B cell (primary cell): ENCODE measurements at regions of chr19 and their contacts with region 1.

Region 1: GRCh38 chr19:49427855-49428546 is 2.8 kb downstream of the GFY start:
- DNase-seq: peak; percentile 57
- ATAC-seq: peak; percentile 47
- H3K4me3 ChIP-seq: peak overlapping the region in 4 of 5 experiments; percentile 11 to 63 (median 34)
- H3K4me3 Mint-ChIP-seq: peak overlapping the region; percentile 82
- H3K27ac ChIP-seq: no peak overlapping the region
- H3K27ac Mint-ChIP-seq: peak overlapping the region; percentile 32
- H3K4me1 ChIP-seq: peaks cover 54 to 63% of the 10 kb centered on the region in 2 donors
- H3K4me1 Mint-ChIP-seq: peaks cover 59% of the 10 kb centered on the region
- H3K27me3 ChIP-seq: peaks cover 0 to 99% (median 71%) of the 10 kb centered on the region in 4 experiments
- H3K27me3 Mint-ChIP-seq: peaks cover 77% of the 10 kb centered on the region
- CTCF ChIP-seq: no peak

Region 2: DNA sequence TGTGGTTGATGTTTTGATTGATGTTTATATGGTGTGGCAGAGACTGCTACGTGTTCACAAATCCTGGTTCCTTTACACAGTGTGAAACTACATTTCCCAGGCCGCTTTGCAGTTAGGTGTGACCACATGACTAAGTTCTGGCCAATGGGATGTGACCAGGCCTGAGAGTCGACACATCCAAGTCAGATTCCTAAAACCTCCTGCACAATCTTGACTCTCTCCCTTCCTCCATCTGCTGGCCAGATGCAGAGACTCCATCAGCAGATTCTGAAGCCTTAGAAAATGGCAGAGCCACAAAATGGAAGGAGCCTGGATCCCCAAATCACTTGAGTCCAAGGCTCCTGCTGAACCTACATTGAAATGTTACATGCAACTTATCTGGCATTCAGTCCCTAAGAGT is 80.2 kb before region 1 on chr19:
- CTCF ChIA-PET with region 1: no interaction called
- POLR2A ChIA-PET with region 1: no interaction called
- intact Hi-C with region 1: no loop called
- DNase-seq: peak; percentile 51
- ATAC-seq: peak; percentile 50
- H3K4me3 ChIP-seq: no peak overlapping the region
- H3K4me3 Mint-ChIP-seq: peak overlapping the region; percentile 18
- H3K27ac ChIP-seq: no peak overlapping the region
- H3K27ac Mint-ChIP-seq: peak overlapping the region; percentile 57
- H3K4me1 ChIP-seq: peaks cover 6 to 38% of the 10 kb centered on the region in 2 donors
- H3K4me1 Mint-ChIP-seq: peaks cover 39% of the 10 kb centered on the region
- H3K27me3 ChIP-seq: no peaks in the 10 kb centered on the region
- H3K27me3 Mint-ChIP-seq: no peaks in the 10 kb centered on the region
- CTCF ChIP-seq: no peak

Region 3: GRCh38 chr19:49409441-49410029 is 18.5 kb before region 1 on chr19:
- CTCF ChIA-PET with region 1: interaction called, 4 read pairs
- POLR2A ChIA-PET with region 1: interaction called, 9 read pairs
- intact Hi-C with region 1: loop called (anchors 2 kb)
- DNase-seq: peak; percentile 71
- ATAC-seq: peak; percentile 85
- H3K4me3 ChIP-seq: peak overlapping the region in 1 of 5 experiments; percentile 45
- H3K4me3 Mint-ChIP-seq: peak overlapping the region; percentile 52
- H3K27ac ChIP-seq: peak overlapping the region; percentile 50 to 55
- H3K27ac Mint-ChIP-seq: peak overlapping the region; percentile 60
- H3K4me1 ChIP-seq: peaks cover 34 to 46% of the 10 kb centered on the region in 2 donors
- H3K4me1 Mint-ChIP-seq: peaks cover 46% of the 10 kb centered on the region
- H3K27me3 ChIP-seq: no peaks in the 10 kb centered on the region
- H3K27me3 Mint-ChIP-seq: no peaks in the 10 kb centered on the region
- CTCF ChIP-seq: no peak

Region 4: GRCh38 chr19:49481020-49481683 is 53.2 kb after region 1 on chr19:
- CTCF ChIA-PET with region 1: no interaction called
- POLR2A ChIA-PET with region 1: no interaction called
- intact Hi-C with region 1: no loop called
- DNase-seq: no peak
- ATAC-seq: no peak
- H3K4me3 ChIP-seq: no peak overlapping the region
- H3K4me3 Mint-ChIP-seq: no peak overlapping the region
- H3K27ac ChIP-seq: no peak overlapping the region
- H3K27ac Mint-ChIP-seq: no peak overlapping the region
- H3K4me1 ChIP-seq: peaks cover 0 to 9% of the 10 kb centered on the region in 2 donors
- H3K4me1 Mint-ChIP-seq: peaks cover 7% of the 10 kb centered on the region
- H3K27me3 ChIP-seq: no peaks in the 10 kb centered on the region
- H3K27me3 Mint-ChIP-seq: no peaks in the 10 kb centered on the region
- CTCF ChIP-seq: no peak